ENCODE measurements at regions of chr15 and their contacts with region 1.

Region 1: GRCh38 chr15:41989259-41989933 is 17.0 kb upstream of the EHD4 start:
- DNase-seq: peak; percentile 59
- ATAC-seq: peak; percentile 100
- H3K4me3 ChIP-seq: no peak overlapping the region
- H3K27ac ChIP-seq: no peak overlapping the region
- H3K4me1 ChIP-seq: no peaks in the 10 kb centered on the region
- H3K27me3 ChIP-seq: peaks cover 36% of the 10 kb centered on the region; the same call in 1 of the 2 replicates
- CTCF ChIP-seq: peak; percentile 96
- POLR2A ChIP-seq: no peak
- RAD21 ChIP-seq: peak; percentile 97

Region 2: GRCh38 chr15:42056934-42057779 is 67.8 kb after region 1 on chr15:
- CTCF ChIA-PET with region 1: interaction called, 4 read pairs
- POLR2A ChIA-PET with region 1: no interaction called
- dilution Hi-C with region 1: no loop called
- in situ Hi-C with region 1: no loop called
- intact Hi-C with region 1: loop called (anchors 1 kb)
- DNase-seq: peak; percentile 62
- ATAC-seq: peak; percentile 94
- H3K4me3 ChIP-seq: peak overlapping the region; percentile 3; the same call in 1 of the 2 replicates
- H3K27ac ChIP-seq: no peak overlapping the region
- H3K4me1 ChIP-seq: no peaks in the 10 kb centered on the region
- H3K27me3 ChIP-seq: peaks cover 42% of the 10 kb centered on the region
- CTCF ChIP-seq: peak; percentile 52
- POLR2A ChIP-seq: no peak
- RAD21 ChIP-seq: peak; percentile 48

Region 3: DNA sequence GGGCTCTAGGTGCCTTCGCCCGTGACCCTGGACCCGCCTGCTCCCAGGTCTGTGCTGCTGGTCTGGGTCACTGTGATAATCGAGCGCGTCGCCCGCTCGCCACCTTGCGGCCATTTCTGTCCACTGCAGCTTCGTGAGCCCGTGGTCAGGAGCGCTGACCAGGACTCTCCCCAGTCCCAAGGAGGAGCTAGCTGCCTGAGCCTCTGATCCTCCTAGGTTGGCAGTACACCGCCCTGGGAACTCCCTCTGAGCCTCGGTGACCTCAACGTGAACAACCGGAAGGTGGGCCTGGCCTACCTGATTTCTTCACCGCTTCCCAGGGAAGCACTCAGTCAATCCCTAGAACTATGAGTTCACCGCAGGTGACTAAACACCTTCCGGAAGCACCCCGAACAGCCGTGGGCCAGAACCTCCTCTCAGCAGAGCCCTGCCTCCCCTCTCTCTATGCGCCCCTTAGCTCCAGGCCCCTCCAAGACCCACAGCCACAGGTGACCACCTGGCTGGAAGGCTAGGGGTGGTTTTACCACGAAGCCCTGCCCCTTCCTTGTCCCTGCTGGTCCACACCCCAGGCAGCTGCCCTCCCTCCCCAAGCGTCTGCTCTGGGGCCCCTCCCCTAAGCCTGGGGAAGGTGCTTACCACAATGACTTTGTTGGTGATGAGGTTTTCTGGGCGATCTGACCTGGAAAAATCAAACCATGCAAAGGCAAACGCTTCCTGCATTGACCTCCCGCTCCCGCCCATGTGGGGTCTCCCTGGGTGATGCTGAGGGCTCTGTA is 95.3 kb after region 1 on chr15:
- CTCF ChIA-PET with region 1: interaction called, 5 read pairs
- POLR2A ChIA-PET with region 1: no interaction called
- dilution Hi-C with region 1: no loop called
- in situ Hi-C with region 1: no loop called
- intact Hi-C with region 1: loop called (anchors 1 kb)
- DNase-seq: peak; percentile 37
- ATAC-seq: peak; percentile 99
- H3K4me3 ChIP-seq: no peak overlapping the region
- H3K27ac ChIP-seq: no peak overlapping the region
- H3K4me1 ChIP-seq: no peaks in the 10 kb centered on the region
- H3K27me3 ChIP-seq: peaks cover 81% of the 10 kb centered on the region
- CTCF ChIP-seq: peak; percentile 89
- POLR2A ChIP-seq: no peak
- RAD21 ChIP-seq: peak; percentile 73